GM12878 (cell line): ENCODE measurements at regions of chr14 and their contacts with region 1.

Region 1: DNA sequence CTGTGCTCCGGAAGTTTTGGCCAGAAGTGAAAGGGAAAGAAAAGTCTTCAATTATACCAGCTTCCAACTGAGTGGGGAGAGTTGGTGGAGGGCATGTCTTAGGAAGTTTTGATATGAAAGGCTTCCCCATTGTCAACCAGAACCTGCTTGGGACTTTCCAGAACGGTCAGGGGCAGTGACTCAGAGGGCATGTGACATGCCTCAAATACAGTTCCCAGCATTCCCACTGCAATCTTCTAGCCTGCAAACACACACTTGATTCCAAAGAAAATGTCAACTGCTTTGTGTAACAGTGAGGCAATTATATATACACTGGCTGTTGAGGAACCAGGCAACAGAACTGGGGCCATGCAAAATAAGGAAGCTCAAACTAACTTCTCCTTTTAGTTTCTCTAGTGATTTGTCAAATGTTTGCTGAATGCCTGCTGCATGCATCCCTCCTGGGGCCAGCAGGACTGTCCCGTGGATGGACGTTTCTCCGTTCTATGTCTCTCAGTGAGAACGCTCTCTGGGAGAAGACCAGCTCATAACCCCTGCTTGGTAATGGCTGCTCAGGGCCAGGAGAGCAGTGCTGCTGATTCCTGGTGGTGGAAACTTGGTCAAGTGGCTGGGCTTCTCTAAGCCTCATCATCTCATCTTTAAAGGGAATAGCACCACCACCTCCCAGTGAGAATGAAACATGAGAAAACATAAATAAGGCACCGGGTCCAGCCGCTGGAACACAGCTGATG is 18.3 kb downstream of the SLC25A47 start:
- DNase-seq: peak; percentile 44
- ATAC-seq: peak; percentile 81
- H3K4me3 ChIP-seq: no peak overlapping the region
- H3K27ac ChIP-seq: peak overlapping the region; percentile 75
- H3K4me1 ChIP-seq: peaks cover 23% of the 10 kb centered on the region
- H3K27me3 ChIP-seq: no peaks in the 10 kb centered on the region
- CTCF ChIP-seq: no peak
- EP300 ChIP-seq: peak; percentile 17 to 19; a peak in 1 of 4 replicates
- POLR2A ChIP-seq: no peak
- RAD21 ChIP-seq: no peak

Region 2: DNA sequence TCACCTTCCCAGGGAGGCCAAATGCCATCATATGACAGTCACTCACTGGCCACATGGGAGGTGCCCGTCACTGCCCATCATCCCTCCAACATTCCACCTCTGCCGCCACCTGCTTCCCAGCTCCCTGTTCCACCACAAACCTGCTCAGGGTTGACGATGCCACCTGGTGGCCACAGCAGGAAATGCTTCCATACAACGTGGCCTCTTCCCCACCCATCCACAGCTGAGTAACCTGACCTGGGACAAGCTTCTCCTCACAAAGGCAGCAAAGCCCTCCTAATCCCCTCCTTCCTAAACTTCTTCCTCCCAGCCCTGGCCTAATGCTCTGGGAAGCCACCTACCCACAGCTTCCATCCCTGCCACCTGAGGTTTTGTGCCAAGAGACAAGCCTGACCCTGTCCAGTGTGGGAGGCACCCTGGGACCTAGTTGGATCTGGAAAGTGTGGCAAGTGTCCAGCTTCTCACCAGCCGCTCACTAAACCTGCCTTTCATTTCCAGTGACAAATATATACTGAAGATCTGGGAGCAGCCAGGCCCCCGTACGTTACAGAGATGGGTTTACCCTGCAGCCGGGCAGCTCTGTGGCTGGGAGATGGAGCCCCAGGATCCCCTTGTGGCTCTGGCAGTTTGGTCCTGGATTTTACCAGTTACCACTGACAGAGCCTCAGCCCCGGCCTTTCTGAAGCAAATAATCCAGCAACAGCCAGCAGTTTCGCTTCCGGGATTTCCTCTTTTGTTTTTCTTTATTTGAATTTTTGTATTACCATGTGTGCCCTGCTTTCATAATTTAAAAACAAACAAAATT is 186.2 kb before region 1 on chr14:
- CTCF ChIA-PET with region 1: no interaction called
- POLR2A ChIA-PET with region 1: no interaction called
- RAD21 ChIA-PET with region 1: no interaction called
- SMC1A ChIA-PET with region 1: no interaction called
- in situ Hi-C with region 1: no loop called
- intact Hi-C with region 1: no loop called
- DNase-seq: no peak
- ATAC-seq: no peak
- H3K4me3 ChIP-seq: no peak overlapping the region
- H3K27ac ChIP-seq: no peak overlapping the region
- H3K4me1 ChIP-seq: peaks cover 15% of the 10 kb centered on the region
- H3K27me3 ChIP-seq: peaks cover 0 to 3% of the 10 kb centered on the region in 2 experiments; a peak in 2 of 4 replicates
- CTCF ChIP-seq: peak; percentile 19 to 62 (median 56)
- EP300 ChIP-seq: no peak
- POLR2A ChIP-seq: no peak
- RAD21 ChIP-seq: no peak

Region 3: GRCh38 chr14:100306420-100307219 is 34.8 kb before region 1 on chr14 and contains the start of gene SLC25A29:
- CTCF ChIA-PET with region 1: interaction called, 19 read pairs
- POLR2A ChIA-PET with region 1: no interaction called
- RAD21 ChIA-PET with region 1: interaction called, 5 read pairs
- SMC1A ChIA-PET with region 1: no interaction called
- in situ Hi-C with region 1: no loop called
- intact Hi-C with region 1: no loop called
- DNase-seq: no peak
- ATAC-seq: peak; percentile 96
- H3K4me3 ChIP-seq: peak within 1 kb of the TSS; percentile 85
- H3K27ac ChIP-seq: no peak within 1 kb of the TSS
- H3K4me1 ChIP-seq: no peaks in the 10 kb centered on the region
- H3K27me3 ChIP-seq: peaks cover 0 to 7% of the 10 kb centered on the region in 2 experiments; a peak in 1 of 4 replicates
- CTCF ChIP-seq: no peak
- EP300 ChIP-seq: no peak
- POLR2A ChIP-seq: peak; percentile 76
- RAD21 ChIP-seq: no peak
- polyA plus RNA-seq, gene SLC25A29: 0.42 TPM in 1 of 2 experiments, not detected in the other

Region 4: DNA sequence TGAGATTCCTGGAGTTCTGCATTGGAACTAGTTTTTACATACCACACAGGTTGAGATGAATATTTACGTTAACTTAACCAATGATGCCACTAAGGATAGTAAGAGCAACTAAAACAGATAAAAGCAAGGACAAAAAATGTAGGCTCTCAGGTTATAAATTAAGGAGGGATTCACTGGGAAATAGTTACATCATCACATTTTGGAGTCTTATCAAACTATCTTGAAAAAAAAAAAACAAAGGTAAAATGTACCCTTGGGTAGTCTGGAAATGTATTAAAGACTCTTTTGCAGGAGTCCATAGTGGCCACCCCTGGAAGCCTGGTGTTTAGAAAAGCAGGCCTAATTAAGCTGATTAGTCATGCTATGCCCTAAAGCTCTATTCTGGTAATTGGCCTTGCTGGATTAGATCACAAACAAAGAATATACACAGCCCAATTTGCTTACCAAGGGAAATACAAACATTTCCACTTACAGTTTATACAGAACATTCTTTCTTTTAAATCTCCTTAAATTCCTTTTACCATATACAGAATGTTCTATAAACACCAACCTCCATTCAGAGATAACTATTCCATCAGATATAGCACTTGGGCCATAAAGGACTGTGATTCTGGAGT is 21.0 kb after region 1 on chr14:
- CTCF ChIA-PET with region 1: interaction called, 3 read pairs
- POLR2A ChIA-PET with region 1: no interaction called
- RAD21 ChIA-PET with region 1: interaction called, 6 read pairs
- SMC1A ChIA-PET with region 1: interaction called, 10 read pairs
- in situ Hi-C with region 1: no loop called
- intact Hi-C with region 1: no loop called
- DNase-seq: no peak
- ATAC-seq: no peak
- H3K4me3 ChIP-seq: no peak overlapping the region
- H3K27ac ChIP-seq: no peak overlapping the region
- H3K4me1 ChIP-seq: no peaks in the 10 kb centered on the region; the same call in 1 of the 2 replicates
- H3K27me3 ChIP-seq: no peaks in the 10 kb centered on the region
- CTCF ChIP-seq: no peak
- EP300 ChIP-seq: no peak
- POLR2A ChIP-seq: no peak
- RAD21 ChIP-seq: no peak